Gastrocnemius medialis (tissue), 4 donors: ENCODE measurements at regions of chr4 and their contacts with region 1.

Region 1: GRCh38 chr4:143482840-143483239 is 30.7 kb upstream of the SMARCA5 start:
- DNase-seq: no peak
- ATAC-seq: peak; percentile 50 to 62
- H3K4me3 ChIP-seq: no peak overlapping the region
- H3K27ac ChIP-seq: no peak overlapping the region
- H3K4me1 ChIP-seq: no peaks in the 10 kb centered on the region
- H3K27me3 ChIP-seq: no peaks in the 10 kb centered on the region
- CTCF ChIP-seq: peak; percentile 57 to 75 (median 61)
- POLR2A ChIP-seq: no peak

Region 2: GRCh38 chr4:142984871-142985585 is 497.8 kb before region 1 on chr4:
- in situ Hi-C with region 1: loop called in 1 of 4 experiments (anchors 25 kb)
- intact Hi-C with region 1: loop called (anchors 5 kb)
- DNase-seq: no peak
- ATAC-seq: no peak
- H3K4me3 ChIP-seq: no peak overlapping the region
- H3K27ac ChIP-seq: no peak overlapping the region
- H3K4me1 ChIP-seq: no peaks in the 10 kb centered on the region
- H3K27me3 ChIP-seq: no peaks in the 10 kb centered on the region
- CTCF ChIP-seq: peak in 1 of 5 experiments; percentile 37
- POLR2A ChIP-seq: no peak

Region 3: GRCh38 chr4:143207557-143207956 is 275.3 kb before region 1 on chr4:
- in situ Hi-C with region 1: loop called (anchors 10 to 25 kb)
- intact Hi-C with region 1: loop called (anchors 2 kb)
- DNase-seq: no peak
- ATAC-seq: peak in 1 of 2 donors; percentile 68
- H3K4me3 ChIP-seq: no peak overlapping the region
- H3K27ac ChIP-seq: peak overlapping the region in 3 of 4 donors; percentile 6 to 57 (median 53)
- H3K4me1 ChIP-seq: peaks cover 34 to 50% of the 10 kb centered on the region in 2 donors
- H3K27me3 ChIP-seq: no peaks in the 10 kb centered on the region
- CTCF ChIP-seq: peak in 3 of 5 experiments; percentile 16 to 43 (median 33)
- POLR2A ChIP-seq: no peak

Region 4: DNA sequence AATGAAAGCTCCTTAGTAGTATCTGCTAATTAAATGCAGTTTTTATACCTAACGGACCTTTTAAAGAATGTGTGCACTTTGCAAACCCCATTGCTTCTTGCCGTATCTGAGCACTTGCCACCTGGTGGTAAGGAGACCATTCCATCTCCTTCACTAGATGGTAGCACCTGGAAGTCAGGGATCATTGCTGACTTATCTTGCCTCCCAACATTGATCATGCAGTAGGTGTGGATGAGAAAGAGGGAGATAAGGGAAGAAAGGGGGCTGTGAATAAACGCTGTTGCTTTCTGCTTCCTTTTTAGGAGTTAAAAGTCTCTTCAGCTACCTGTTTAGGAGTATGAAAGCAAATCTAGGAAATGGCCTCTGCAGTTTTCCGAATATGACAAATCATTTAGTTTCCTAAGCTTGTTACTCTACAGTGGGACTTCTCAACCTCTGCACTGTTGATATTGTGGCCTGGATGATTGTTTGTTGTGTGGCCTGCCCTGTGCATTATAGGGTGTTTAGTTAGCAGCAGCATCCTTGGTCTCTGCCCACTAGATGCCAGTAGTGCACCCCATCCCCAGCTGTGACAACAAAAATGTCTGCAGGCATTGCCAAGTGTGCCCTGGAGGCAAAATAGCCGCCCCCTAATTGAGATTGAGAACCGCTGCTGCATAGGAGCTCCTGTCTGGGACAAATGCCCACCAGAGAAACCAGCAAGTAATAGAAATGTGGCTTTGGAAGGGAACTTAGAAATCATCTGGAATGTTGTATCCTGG is 107.3 kb before region 1 on chr4:
- in situ Hi-C with region 1: no loop called
- intact Hi-C with region 1: loop called (anchors 2 kb)
- DNase-seq: peak in 1 of 2 donors; percentile 35
- ATAC-seq: peak; percentile 46 to 58
- H3K4me3 ChIP-seq: no peak overlapping the region
- H3K27ac ChIP-seq: peak overlapping the region; percentile 69 to 92 (median 86)
- H3K4me1 ChIP-seq: peaks cover 81 to 82% of the 10 kb centered on the region in 2 donors
- H3K27me3 ChIP-seq: no peaks in the 10 kb centered on the region
- CTCF ChIP-seq: peak; percentile 38 to 61 (median 40)
- POLR2A ChIP-seq: no peak

Region 5: DNA sequence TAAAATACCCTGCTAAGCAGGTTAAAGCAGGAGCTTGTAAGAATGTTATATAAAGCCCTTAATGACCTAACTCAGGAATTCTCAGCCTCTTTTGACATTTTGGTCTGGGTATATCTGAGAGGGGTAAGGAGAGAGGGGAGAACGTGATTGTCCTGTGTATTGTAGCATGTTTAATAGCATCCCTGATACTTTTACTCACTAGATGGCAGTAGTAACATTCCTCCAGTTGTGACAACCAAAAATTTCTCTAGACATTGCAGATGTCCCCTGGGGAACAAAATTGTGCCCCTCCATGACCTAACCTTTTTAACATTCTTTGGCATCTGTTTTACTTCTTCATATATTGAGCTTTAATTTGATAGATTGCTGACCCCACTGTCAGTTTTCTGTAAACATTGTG is 48.5 kb after region 1 on chr4:
- in situ Hi-C with region 1: no loop called
- intact Hi-C with region 1: no loop called
- DNase-seq: no peak
- ATAC-seq: no peak
- H3K4me3 ChIP-seq: no peak overlapping the region
- H3K27ac ChIP-seq: no peak overlapping the region
- H3K4me1 ChIP-seq: no peaks in the 10 kb centered on the region
- H3K27me3 ChIP-seq: no peaks in the 10 kb centered on the region
- CTCF ChIP-seq: no peak
- POLR2A ChIP-seq: no peak

Region 6: DNA sequence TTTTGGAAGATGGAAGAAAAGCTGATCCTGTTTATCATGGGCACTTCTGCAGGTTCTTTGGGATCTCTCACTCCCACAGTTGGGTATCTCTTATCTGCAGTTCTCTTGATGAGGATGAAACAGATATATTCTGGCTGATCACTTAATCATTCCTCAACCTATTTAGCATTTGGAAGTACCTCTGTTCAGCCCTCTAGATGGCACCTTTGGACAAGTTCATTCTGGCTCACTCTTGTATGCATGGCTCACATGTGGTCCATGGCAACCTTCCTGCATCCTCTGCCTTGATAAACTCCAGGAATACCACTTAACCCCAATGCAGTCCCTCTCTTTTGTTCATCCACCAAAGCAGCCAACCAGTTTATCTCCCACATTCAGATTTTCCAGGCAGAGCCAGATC is 104.9 kb after region 1 on chr4:
- in situ Hi-C with region 1: no loop called
- intact Hi-C with region 1: no loop called
- DNase-seq: no peak
- ATAC-seq: no peak
- H3K4me3 ChIP-seq: no peak overlapping the region
- H3K27ac ChIP-seq: no peak overlapping the region
- H3K4me1 ChIP-seq: no peaks in the 10 kb centered on the region
- H3K27me3 ChIP-seq: no peaks in the 10 kb centered on the region
- CTCF ChIP-seq: no peak
- POLR2A ChIP-seq: no peak

Region 7: DNA sequence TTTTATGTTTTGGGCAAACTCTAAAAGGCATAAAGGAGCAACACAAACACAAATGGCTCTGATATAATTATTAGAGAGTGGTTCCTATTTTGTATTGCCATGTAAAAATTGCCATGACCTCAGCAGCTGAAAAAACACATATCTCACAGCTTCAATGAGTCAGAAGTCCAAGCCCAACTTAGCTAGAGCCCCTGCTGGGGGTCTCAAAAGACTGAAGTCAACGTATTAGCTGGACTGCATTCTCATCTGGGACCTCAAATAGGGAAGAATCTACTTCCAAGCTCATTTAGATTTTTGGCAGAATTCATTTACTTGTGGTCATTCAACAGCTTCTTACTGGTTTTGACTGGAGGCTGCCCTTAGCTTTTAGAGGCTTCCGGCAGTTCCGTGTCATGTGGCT is 170.2 kb after region 1 on chr4:
- in situ Hi-C with region 1: no loop called
- intact Hi-C with region 1: no loop called
- DNase-seq: no peak
- ATAC-seq: no peak
- H3K4me3 ChIP-seq: no peak overlapping the region
- H3K27ac ChIP-seq: no peak overlapping the region
- H3K4me1 ChIP-seq: no peaks in the 10 kb centered on the region
- H3K27me3 ChIP-seq: no peaks in the 10 kb centered on the region
- CTCF ChIP-seq: no peak
- POLR2A ChIP-seq: no peak

Region 8: DNA sequence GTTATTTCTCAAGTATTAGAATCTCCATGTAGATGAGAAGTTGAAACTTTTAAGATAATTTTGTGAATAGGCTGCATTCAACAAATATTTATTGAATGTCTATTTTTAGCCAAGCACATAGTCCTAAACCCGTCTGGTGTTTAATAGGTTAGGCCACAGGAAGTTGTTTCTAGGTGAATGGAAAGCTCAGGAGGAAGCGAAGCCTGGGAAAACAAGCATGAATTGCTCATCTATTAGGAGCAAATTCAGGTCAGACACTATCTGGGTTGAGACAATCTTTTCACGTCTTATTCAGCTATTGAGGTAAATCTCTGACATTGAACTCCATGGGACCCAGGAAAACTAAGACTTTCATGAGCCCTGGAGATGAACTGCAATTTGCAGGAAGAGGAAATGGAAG is 260.8 kb after region 1 on chr4:
- in situ Hi-C with region 1: no loop called
- intact Hi-C with region 1: no loop called
- DNase-seq: no peak
- ATAC-seq: no peak
- H3K4me3 ChIP-seq: no peak overlapping the region
- H3K27ac ChIP-seq: no peak overlapping the region
- H3K4me1 ChIP-seq: no peaks in the 10 kb centered on the region
- H3K27me3 ChIP-seq: no peaks in the 10 kb centered on the region
- CTCF ChIP-seq: no peak
- POLR2A ChIP-seq: no peak